ENCODE measurements at regions of chr2 and their contacts with region 1.

Region 1: GRCh38 chr2:38581193-38582147 is 21.3 kb downstream of the HNRNPLL start:
- DNase-seq: peak; percentile 57
- H3K4me3 ChIP-seq: no peak overlapping the region
- H3K27ac ChIP-seq: no peak overlapping the region
- H3K27me3 ChIP-seq: no peaks in the 10 kb centered on the region
- CTCF ChIP-seq: peak; percentile 66

Region 2: DNA sequence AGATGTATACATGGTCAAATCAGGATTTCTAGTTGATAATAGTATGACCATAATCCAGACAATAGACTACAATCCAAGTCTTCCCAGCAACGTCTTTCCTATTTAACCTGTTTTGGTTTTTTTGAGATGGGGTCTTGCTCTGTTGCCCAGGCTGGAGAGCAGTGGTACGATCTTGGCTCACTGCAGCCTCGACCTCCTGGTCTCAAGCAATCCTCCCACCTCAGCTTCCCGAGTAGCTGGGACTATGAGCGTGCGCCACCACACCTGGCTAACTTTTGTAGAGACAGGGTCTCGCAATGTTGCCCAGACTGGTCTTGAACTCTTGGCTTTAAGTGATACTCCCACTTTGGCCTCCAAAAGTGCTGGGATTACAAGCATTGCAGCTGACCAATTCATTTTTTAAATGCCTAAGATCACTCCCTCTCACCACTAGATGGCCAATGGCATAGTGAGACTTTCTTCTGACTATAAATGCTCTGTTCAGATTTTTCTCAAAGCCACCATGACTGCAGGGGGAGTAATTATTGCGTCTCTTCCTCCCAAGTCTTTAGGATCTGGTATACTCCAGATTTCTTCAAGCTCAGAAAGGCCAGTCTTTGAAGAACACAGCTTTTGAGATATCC is 26.4 kb before region 1 on chr2:
- CTCF ChIA-PET with region 1: interaction called, 19 read pairs
- POLR2A ChIA-PET with region 1: no interaction called
- DNase-seq: no peak
- H3K4me3 ChIP-seq: no peak overlapping the region
- H3K27ac ChIP-seq: no peak overlapping the region
- H3K27me3 ChIP-seq: no peaks in the 10 kb centered on the region
- CTCF ChIP-seq: peak; percentile 61

Region 3: DNA sequence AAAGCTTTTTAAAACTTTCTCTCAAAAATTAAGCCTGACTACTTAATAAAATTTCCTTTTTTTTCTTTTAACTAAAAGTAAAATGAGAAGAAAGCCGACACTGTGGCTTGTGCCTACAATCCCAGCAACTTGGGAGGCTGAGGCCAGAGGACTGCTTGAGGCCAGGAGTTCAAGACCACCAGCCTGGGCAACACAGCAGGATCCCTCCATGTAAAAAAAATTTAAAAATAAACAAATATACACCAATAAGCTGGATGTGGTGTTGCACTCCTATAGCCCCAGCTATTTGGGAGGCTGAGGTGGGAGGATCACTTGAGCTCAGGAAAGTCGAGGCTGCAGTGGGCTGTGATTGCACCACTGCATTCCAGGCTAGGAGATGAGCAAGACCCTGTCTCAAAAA is 16.1 kb before region 1 on chr2:
- CTCF ChIA-PET with region 1: interaction called, 36 read pairs
- POLR2A ChIA-PET with region 1: interaction called, 4 read pairs
- DNase-seq: no peak
- H3K4me3 ChIP-seq: no peak overlapping the region
- H3K27ac ChIP-seq: no peak overlapping the region
- H3K27me3 ChIP-seq: no peaks in the 10 kb centered on the region
- CTCF ChIP-seq: no peak

Region 4: DNA sequence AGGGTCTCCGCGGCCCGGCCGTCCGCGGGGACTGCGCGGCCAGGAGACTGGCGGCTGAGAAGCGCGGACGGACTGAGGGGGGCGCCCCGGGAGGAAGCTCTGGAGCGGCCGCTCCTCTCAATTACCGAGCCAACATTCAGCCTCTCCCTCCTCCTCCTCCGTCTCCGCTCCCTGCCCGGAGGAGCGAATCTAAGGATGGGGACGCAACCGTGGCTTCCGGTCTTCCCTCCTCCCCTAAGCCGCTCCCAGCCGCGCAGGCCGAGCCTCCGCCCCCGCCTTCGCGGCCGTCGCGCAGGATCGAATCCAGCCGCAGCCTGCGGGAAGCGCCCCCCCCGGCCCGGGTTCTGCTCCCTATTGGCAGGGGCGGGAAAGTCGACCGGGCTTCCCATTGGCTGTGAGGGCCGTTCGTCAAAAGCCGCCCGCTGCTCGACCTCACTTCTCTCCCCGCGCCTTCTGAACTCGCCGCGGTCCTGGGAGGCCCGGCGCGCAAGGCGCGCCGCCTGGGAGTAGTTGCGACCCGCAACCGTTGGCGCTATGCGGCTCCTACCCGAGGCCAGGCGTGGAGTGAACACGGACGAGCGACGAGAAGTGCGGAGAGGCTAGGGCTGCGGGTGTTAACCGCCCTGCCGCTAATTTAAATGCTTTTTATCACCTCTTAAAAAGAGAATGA is 21.4 kb after region 1 on chr2 and contains the start of gene HNRNPLL:
- CTCF ChIA-PET with region 1: interaction called, 14 read pairs
- POLR2A ChIA-PET with region 1: interaction called, 9 read pairs
- DNase-seq: peak; percentile 93
- H3K4me3 ChIP-seq: peak within 1 kb of the TSS; percentile 81
- H3K27ac ChIP-seq: peak within 1 kb of the TSS; percentile 77
- H3K27me3 ChIP-seq: no peaks in the 10 kb centered on the region
- CTCF ChIP-seq: no peak
- polyA plus RNA-seq, gene HNRNPLL: 55.0 and 78.5 TPM in 2 replicates

Region 5: GRCh38 chr2:38728694-38729093 is 147.2 kb after region 1 on chr2:
- CTCF ChIA-PET with region 1: interaction called, 49 read pairs
- POLR2A ChIA-PET with region 1: interaction called, 6 read pairs
- DNase-seq: no peak
- H3K4me3 ChIP-seq: no peak overlapping the region
- H3K27ac ChIP-seq: no peak overlapping the region
- H3K27me3 ChIP-seq: no peaks in the 10 kb centered on the region
- CTCF ChIP-seq: no peak

Region 6: DNA sequence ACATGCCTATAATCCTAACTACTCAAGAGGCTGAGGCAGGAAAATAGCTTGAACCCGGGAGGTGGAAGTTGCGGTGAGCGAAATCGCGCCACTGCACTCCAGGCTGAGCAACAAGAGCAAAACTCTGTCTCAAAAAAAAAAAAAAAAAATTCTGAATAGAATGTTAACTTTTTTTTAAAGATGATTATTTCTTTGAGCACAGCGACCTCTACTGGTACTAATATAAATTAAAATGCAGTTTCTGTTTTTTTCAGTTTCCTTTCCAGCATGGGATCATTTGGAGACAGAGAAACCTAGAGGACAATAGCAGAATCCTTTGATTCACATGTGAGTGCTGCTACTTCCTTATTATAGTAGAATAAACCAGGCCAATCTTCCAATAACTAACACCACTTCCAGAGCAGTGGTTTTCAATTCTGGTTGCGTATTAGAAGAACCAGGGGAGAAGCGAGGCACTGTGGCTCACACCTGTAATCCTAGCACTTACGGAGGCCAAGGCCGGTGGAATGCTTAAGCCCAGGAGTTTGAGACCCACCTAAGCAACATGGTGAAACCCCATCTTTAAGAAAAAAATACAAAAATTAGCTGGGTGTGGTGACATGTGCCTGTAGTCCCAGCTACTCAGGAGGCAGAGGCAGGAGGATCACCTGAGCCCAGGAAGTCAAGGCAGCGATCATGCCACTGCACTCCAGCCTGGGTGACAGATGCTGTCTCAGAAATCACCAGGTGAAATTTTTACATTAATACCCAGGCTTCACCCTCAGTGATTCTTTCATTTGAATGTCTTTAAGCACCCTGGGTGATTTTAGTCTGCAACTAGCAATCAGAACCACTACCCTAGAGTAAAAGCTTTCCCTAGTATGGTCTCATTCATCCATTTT is 159.6 kb after region 1 on chr2:
- CTCF ChIA-PET with region 1: interaction called, 24 read pairs
- POLR2A ChIA-PET with region 1: interaction called, 9 read pairs
- DNase-seq: no peak
- H3K4me3 ChIP-seq: no peak overlapping the region
- H3K27ac ChIP-seq: peak overlapping the region; percentile 34
- H3K27me3 ChIP-seq: no peaks in the 10 kb centered on the region
- CTCF ChIP-seq: peak; percentile 39